CD8-positive, alpha-beta memory T cell (primary cell): ENCODE measurements at regions of chr4 and their contacts with region 1.

Region 1: GRCh38 chr4:55458164-55458563 is 62.4 kb downstream of the TMEM165 start:
- DNase-seq: no peak
- H3K4me3 ChIP-seq: no peak overlapping the region
- H3K4me3 Mint-ChIP-seq: no peak overlapping the region
- H3K27ac ChIP-seq: no peak overlapping the region
- H3K27ac Mint-ChIP-seq: no peak overlapping the region
- H3K4me1 ChIP-seq: no peaks in the 10 kb centered on the region
- H3K4me1 Mint-ChIP-seq: no peaks in the 10 kb centered on the region
- H3K27me3 ChIP-seq: no peaks in the 10 kb centered on the region
- H3K27me3 Mint-ChIP-seq: no peaks in the 10 kb centered on the region

Region 2: DNA sequence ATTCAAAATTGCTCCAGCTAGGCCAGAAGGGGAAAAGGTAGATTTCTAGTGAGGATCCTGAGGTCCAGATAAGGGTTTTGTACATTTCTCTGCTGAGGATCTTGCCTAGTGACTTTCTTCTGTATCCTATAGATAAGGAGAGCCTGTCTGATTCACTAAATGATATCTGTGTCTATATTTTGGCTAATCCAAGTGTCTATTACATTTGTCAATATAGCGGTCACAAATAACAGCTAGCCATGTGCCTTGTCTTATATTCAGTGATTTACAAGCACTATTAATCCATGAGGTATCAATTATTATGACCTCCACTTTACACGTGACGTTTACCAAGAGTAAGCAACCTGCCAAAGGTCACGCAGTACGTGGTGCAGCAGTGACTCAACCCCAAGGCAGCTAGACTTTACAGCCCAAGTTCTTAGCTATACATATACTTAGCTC is 20.8 kb before region 1 on chr4:
- CTCF ChIA-PET with region 1: no interaction called
- POLR2A ChIA-PET with region 1: interaction called, 12 read pairs
- DNase-seq: no peak
- H3K4me3 ChIP-seq: no peak overlapping the region
- H3K4me3 Mint-ChIP-seq: no peak overlapping the region
- H3K27ac ChIP-seq: no peak overlapping the region
- H3K27ac Mint-ChIP-seq: peak overlapping the region in 3 of 8 donors; percentile 26 to 71 (median 53)
- H3K4me1 ChIP-seq: peaks cover 8% of the 10 kb centered on the region
- H3K4me1 Mint-ChIP-seq: peaks cover 17 to 22% (median 17%) of the 10 kb centered on the region in 3 donors
- H3K27me3 ChIP-seq: no peaks in the 10 kb centered on the region
- H3K27me3 Mint-ChIP-seq: no peaks in the 10 kb centered on the region

Region 3: GRCh38 chr4:55658657-55659056 is 200.5 kb after region 1 on chr4:
- CTCF ChIA-PET with region 1: no interaction called
- POLR2A ChIA-PET with region 1: no interaction called
- DNase-seq: no peak
- H3K4me3 ChIP-seq: no peak overlapping the region
- H3K4me3 Mint-ChIP-seq: no peak overlapping the region
- H3K27ac ChIP-seq: no peak overlapping the region
- H3K27ac Mint-ChIP-seq: no peak overlapping the region
- H3K4me1 ChIP-seq: no peaks in the 10 kb centered on the region
- H3K4me1 Mint-ChIP-seq: no peaks in the 10 kb centered on the region
- H3K27me3 ChIP-seq: no peaks in the 10 kb centered on the region
- H3K27me3 Mint-ChIP-seq: peaks cover 5 to 14% of the 10 kb centered on the region in 2 donors